ENCODE measurements at regions of chr5 and their contacts with region 1.

Region 1: DNA sequence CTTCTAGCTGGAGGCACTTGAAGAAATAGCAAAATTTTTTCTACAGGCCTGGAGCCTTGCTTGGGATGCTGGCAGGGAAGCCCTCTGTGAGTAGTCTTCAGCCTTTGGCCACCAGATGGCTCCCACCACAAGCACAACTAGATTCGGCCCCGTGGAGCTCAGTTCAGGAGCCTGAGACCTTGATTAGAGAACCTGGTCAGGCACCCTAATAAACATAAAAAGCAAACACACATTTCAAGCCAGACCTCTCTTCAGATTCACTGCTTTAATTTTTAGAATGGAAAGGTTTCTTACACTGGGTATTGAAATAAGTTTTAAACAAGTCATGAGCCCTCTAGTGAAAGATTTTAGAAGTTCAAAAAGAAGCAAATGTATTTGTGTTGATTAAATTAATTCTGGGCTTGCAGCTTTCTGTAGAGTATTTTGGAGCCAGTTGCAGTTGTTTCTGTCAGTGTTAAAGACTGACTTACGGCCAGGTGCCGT is 41.4 kb downstream of the GLRX start:
- DNase-seq: peak; percentile 86
- ATAC-seq: peak; percentile 98
- H3K4me3 Mint-ChIP-seq: peak overlapping the region; percentile 38
- H3K27ac Mint-ChIP-seq: peak overlapping the region; percentile 71
- H3K4me1 Mint-ChIP-seq: peaks cover 7% of the 10 kb centered on the region
- H3K27me3 Mint-ChIP-seq: peaks cover 2% of the 10 kb centered on the region
- CTCF ChIP-seq: peak; percentile 99

Region 2: DNA sequence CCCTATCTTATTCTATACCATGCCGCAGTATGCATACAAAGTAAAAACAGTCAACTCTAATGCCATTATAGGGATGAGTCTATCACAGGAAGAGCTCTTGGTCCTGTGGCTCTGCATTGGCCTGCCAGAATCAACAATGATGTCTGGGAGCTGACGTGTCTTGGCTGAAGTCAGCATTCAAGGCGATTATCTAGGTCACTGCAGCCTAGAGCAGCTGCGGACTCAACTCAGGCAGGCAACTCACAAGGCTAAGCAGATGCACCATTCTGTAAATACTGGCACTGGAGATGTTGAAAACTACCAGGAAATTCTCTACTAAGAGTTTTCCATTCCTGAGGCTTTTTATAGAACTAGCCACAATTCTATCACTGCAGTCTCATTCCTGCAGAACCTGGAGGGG is 111.6 kb before region 1 on chr5:
- CTCF ChIA-PET with region 1: interaction called, 25 read pairs
- POLR2A ChIA-PET with region 1: no interaction called
- intact Hi-C with region 1: loop called (anchors 5 kb)
- DNase-seq: no peak
- ATAC-seq: no peak
- H3K4me3 Mint-ChIP-seq: no peak overlapping the region
- H3K27ac Mint-ChIP-seq: no peak overlapping the region
- H3K4me1 Mint-ChIP-seq: no peaks in the 10 kb centered on the region
- H3K27me3 Mint-ChIP-seq: peaks cover 2% of the 10 kb centered on the region
- CTCF ChIP-seq: no peak

Region 3: GRCh38 chr5:95794070-95794516 is 13.0 kb after region 1 on chr5:
- CTCF ChIA-PET with region 1: interaction called, 72 read pairs
- POLR2A ChIA-PET with region 1: no interaction called
- intact Hi-C with region 1: no loop called
- DNase-seq: no peak
- ATAC-seq: no peak
- H3K4me3 Mint-ChIP-seq: no peak overlapping the region
- H3K27ac Mint-ChIP-seq: no peak overlapping the region
- H3K4me1 Mint-ChIP-seq: no peaks in the 10 kb centered on the region
- H3K27me3 Mint-ChIP-seq: no peaks in the 10 kb centered on the region
- CTCF ChIP-seq: no peak

Region 4: DNA sequence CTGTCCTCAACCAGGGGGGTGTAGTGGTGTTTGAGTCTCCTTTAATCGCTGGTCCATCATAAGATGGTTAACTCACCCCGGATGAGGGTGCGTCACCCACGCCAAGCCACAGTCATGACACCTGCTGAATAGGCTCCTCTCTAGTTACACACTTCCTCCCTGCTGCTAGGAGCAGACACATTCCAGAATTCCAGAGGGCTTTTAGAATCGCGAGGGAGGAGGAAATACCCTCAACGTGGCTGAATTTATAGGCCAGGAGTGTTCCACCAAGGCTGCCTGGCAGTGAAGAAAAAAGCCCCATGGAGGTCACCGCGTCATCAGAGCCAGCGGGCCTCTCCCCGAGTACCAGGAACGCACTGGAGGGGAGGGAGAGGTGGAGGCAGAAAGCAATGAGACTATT is 36.3 kb after region 1 on chr5:
- CTCF ChIA-PET with region 1: interaction called, 94 read pairs
- POLR2A ChIA-PET with region 1: interaction called, 3 read pairs
- intact Hi-C with region 1: no loop called
- DNase-seq: peak; percentile 66
- ATAC-seq: peak; percentile 37
- H3K4me3 Mint-ChIP-seq: peak overlapping the region; percentile 76
- H3K27ac Mint-ChIP-seq: peak overlapping the region; percentile 93
- H3K4me1 Mint-ChIP-seq: peaks cover 59% of the 10 kb centered on the region
- H3K27me3 Mint-ChIP-seq: no peaks in the 10 kb centered on the region
- CTCF ChIP-seq: no peak

Region 5: GRCh38 chr5:95846554-95847260 is 65.6 kb after region 1 on chr5:
- CTCF ChIA-PET with region 1: interaction called, 628 read pairs
- POLR2A ChIA-PET with region 1: interaction called, 3 read pairs
- intact Hi-C with region 1: loop called (anchors 1 kb)
- DNase-seq: peak; percentile 77
- ATAC-seq: peak; percentile 78
- H3K4me3 Mint-ChIP-seq: no peak overlapping the region
- H3K27ac Mint-ChIP-seq: no peak overlapping the region
- H3K4me1 Mint-ChIP-seq: peaks cover 17% of the 10 kb centered on the region
- H3K27me3 Mint-ChIP-seq: no peaks in the 10 kb centered on the region
- CTCF ChIP-seq: peak; percentile 93

Region 6: DNA sequence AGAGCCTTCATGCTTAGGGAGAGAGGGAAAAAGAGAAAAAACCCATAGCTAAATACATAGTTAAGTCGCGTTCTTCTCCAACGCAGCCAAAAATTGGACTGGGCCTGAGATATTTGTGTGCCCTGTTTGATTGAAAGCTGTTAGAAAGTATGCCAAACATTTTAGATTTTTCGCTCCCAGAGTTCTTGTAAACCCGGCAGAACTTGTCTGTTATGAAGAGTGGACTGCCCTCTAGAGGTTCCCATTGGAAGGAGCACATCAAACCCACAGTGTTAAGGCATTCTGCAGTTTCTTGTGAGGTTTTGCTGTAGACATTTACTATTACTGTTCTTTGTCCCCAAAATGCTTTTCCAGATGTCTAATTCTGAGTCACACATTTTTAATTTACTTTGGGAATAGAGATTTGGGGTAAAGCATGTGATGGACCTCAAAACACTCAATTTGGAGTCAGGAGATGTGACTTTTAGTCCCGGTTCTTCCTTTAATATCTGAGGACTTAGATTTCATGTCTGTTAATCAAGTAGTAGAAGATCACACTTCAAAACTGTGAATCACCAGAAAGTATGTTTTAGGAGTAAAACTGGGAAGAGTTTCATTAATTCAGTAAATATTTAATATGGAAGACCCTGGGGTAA is 555.3 kb after region 1 on chr5:
- CTCF ChIA-PET with region 1: interaction called, 17 read pairs
- POLR2A ChIA-PET with region 1: no interaction called
- intact Hi-C with region 1: loop called (anchors 10 kb)
- DNase-seq: peak; percentile 79
- ATAC-seq: peak; percentile 93
- H3K4me3 Mint-ChIP-seq: no peak overlapping the region
- H3K27ac Mint-ChIP-seq: no peak overlapping the region
- H3K4me1 Mint-ChIP-seq: no peaks in the 10 kb centered on the region
- H3K27me3 Mint-ChIP-seq: peaks cover 25% of the 10 kb centered on the region
- CTCF ChIP-seq: peak; percentile 80

Region 7: GRCh38 chr5:96412868-96413449 is 631.8 kb after region 1 on chr5:
- CTCF ChIA-PET with region 1: no interaction called
- POLR2A ChIA-PET with region 1: no interaction called
- intact Hi-C with region 1: no loop called
- DNase-seq: no peak
- ATAC-seq: no peak
- H3K4me3 Mint-ChIP-seq: no peak overlapping the region
- H3K27ac Mint-ChIP-seq: no peak overlapping the region
- H3K4me1 Mint-ChIP-seq: no peaks in the 10 kb centered on the region
- H3K27me3 Mint-ChIP-seq: peaks cover 2% of the 10 kb centered on the region
- CTCF ChIP-seq: no peak